ENCODE measurements at regions of chr15 and their contacts with region 1.

Region 1: GRCh38 chr15:89206908-89207331 is 14.5 kb downstream of the RLBP1 start:
- DNase-seq: peak; percentile 90
- ATAC-seq: peak; percentile 98
- H3K4me3 Mint-ChIP-seq: no peak overlapping the region
- H3K27ac Mint-ChIP-seq: no peak overlapping the region
- H3K4me1 Mint-ChIP-seq: peaks cover 10% of the 10 kb centered on the region
- H3K27me3 Mint-ChIP-seq: no peaks in the 10 kb centered on the region; the same call in 1 of the 2 replicates
- CTCF ChIP-seq: peak; percentile 98

Region 2: GRCh38 chr15:89221543-89221942 is 14.6 kb after region 1 on chr15 and contains the start of gene RLBP1:
- CTCF ChIA-PET with region 1: interaction called, 56 read pairs
- POLR2A ChIA-PET with region 1: no interaction called
- DNase-seq: no peak
- ATAC-seq: peak; percentile 43
- H3K4me3 Mint-ChIP-seq: no peak within 1 kb of the TSS
- H3K27ac Mint-ChIP-seq: 0 out of 2 replicates have a peak within 1 kb of the TSS, but pooled peaks have one; percentile 14
- H3K4me1 Mint-ChIP-seq: 0 out of 2 replicates have a peak, but pooled peaks cover 3% of the 10 kb centered on the region
- H3K27me3 Mint-ChIP-seq: peaks cover 3% of the 10 kb centered on the region; the same call in 1 of the 2 replicates
- CTCF ChIP-seq: no peak
- total RNA-seq, gene RLBP1: not detected in 3 replicates

Region 3: GRCh38 chr15:89243691-89244471 is 37.0 kb after region 1 on chr15 and contains the start of gene FANCI:
- CTCF ChIA-PET with region 1: interaction called, 45 read pairs
- POLR2A ChIA-PET with region 1: no interaction called
- DNase-seq: peak; percentile 98
- ATAC-seq: peak; percentile 96
- H3K4me3 Mint-ChIP-seq: peak within 1 kb of the TSS; percentile 97
- H3K27ac Mint-ChIP-seq: peak within 1 kb of the TSS; percentile 88
- H3K4me1 Mint-ChIP-seq: peaks cover 25% of the 10 kb centered on the region
- H3K27me3 Mint-ChIP-seq: peaks cover 23% of the 10 kb centered on the region
- CTCF ChIP-seq: 0 out of 2 replicates have a peak, but pooled peaks have one; percentile 25
- total RNA-seq, gene FANCI: 94.5 to 108 TPM (median 101 TPM) in 3 replicates

Region 4: GRCh38 chr15:89293012-89293411 is 86.1 kb after region 1 on chr15:
- CTCF ChIA-PET with region 1: interaction called, 11 read pairs
- POLR2A ChIA-PET with region 1: no interaction called
- DNase-seq: no peak
- ATAC-seq: no peak
- H3K4me3 Mint-ChIP-seq: no peak overlapping the region
- H3K27ac Mint-ChIP-seq: no peak overlapping the region
- H3K4me1 Mint-ChIP-seq: no peaks in the 10 kb centered on the region
- H3K27me3 Mint-ChIP-seq: no peaks in the 10 kb centered on the region
- CTCF ChIP-seq: no peak

Region 5: DNA sequence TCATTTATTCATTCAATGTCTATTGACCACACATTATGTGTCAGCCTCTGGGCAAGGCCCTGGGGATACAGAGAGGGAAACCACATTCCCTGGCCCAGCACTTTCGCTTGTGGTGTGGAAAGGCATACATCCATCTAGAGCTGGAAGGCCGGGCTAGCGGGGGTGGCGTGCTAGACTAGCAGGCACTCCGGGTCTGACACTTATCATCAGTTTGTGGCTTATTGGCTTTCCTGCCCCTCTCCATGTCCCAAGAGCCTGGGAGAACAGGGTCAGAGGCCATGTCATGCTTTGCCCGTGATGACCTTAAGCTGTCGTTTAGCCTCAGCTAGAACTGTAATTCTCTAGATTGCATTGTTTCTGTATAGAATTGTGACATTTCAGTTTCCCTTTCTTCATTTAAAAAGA is 179.0 kb after region 1 on chr15:
- CTCF ChIA-PET with region 1: no interaction called
- POLR2A ChIA-PET with region 1: no interaction called
- DNase-seq: no peak
- ATAC-seq: no peak
- H3K4me3 Mint-ChIP-seq: no peak overlapping the region
- H3K27ac Mint-ChIP-seq: no peak overlapping the region
- H3K4me1 Mint-ChIP-seq: peaks cover 38% of the 10 kb centered on the region
- H3K27me3 Mint-ChIP-seq: peaks cover 97% of the 10 kb centered on the region
- CTCF ChIP-seq: no peak

Measured in WTC11 (cell line).